PC-3 (cell line): ENCODE measurements at regions of chr1 and their contacts with region 1.

Region 1: DNA sequence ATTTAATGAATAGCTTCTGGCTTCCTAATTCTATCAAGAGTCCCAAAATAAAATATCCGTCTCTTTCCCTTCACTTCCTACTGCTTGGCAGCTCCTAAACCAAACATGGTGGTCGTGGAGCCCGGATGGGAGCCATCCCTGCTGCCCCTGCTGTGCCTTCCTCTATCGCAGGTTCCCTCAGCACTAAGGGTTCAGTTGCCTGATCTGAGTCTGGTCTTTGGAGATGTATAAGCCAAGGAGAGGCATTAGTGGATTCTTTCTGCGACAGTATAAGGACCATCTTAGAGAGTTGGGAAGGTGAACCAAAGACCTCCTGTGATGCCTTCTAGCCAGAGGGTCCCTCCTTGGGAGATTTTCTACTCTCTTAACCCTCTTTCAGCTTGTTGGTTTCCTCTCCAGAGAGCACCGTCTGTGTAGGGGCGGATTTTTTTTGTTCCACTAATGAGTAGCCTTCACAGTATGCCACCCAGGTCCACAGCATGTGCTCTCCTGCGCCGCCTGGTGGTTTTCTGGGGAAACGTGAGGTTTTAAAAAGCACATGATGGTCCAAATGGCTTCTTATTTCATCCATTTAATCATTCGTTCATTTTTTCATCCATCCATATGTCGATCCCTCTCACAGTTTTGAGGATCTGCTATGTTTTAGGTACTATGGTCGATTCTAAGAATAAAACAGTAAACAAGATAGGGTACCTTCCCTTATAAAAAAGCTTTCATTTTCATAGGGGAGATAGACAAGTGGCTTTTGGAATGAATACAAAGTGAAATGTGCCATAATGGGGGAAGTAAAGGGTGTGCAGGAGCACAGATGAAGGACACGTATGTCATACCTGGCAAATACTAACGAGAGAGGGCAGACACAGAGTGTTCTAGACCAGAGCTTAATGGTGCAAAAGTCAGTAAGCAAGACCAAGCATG is 71.0 kb downstream of the NFASC start:
- DNase-seq: peak; percentile 85
- ATAC-seq: peak; percentile 67
- H3K4me3 ChIP-seq: no peak overlapping the region
- H3K27ac ChIP-seq: no peak overlapping the region
- H3K4me1 ChIP-seq: no peaks in the 10 kb centered on the region
- H3K27me3 ChIP-seq: peaks cover 70% of the 10 kb centered on the region
- CTCF ChIP-seq: peak; percentile 98

Region 2: DNA sequence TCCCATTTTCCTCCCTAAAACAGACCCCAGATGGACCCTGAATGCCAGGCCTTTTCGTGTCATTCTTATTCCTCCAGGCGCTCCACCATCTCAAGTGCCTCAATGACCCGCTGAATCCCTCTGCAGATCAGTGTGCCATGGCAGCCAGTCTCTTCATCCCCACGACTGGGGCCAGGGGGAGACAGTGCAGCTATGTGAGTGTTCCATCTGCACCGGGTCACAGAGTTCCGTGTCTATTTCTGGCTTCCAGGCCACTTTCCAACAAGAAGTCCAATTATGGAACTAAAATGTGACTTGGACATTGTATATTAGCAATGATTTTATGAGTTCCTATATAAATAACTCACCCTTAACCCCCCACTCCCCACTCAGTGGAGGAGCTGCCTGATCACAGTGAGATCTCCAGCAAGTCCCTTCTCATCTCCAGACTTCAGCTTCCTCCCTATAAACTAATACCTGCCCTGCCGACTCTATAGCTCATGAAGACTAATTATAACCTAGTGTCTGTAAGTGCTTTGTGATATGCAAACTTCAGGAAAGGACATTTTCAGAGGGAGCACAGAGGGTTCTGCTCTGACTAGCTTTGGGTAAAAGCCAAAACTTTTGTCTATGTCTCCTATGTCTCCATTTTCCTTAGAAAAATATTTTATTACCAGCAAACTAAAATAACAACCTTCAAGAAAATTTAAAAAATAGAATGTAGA is 127.3 kb before region 1 on chr1:
- CTCF ChIA-PET with region 1: no interaction called
- POLR2A ChIA-PET with region 1: no interaction called
- intact Hi-C with region 1: no loop called
- DNase-seq: no peak
- ATAC-seq: no peak
- H3K4me3 ChIP-seq: no peak overlapping the region
- H3K27ac ChIP-seq: no peak overlapping the region
- H3K4me1 ChIP-seq: no peaks in the 10 kb centered on the region
- H3K27me3 ChIP-seq: peaks cover 62% of the 10 kb centered on the region
- CTCF ChIP-seq: no peak

Region 3: DNA sequence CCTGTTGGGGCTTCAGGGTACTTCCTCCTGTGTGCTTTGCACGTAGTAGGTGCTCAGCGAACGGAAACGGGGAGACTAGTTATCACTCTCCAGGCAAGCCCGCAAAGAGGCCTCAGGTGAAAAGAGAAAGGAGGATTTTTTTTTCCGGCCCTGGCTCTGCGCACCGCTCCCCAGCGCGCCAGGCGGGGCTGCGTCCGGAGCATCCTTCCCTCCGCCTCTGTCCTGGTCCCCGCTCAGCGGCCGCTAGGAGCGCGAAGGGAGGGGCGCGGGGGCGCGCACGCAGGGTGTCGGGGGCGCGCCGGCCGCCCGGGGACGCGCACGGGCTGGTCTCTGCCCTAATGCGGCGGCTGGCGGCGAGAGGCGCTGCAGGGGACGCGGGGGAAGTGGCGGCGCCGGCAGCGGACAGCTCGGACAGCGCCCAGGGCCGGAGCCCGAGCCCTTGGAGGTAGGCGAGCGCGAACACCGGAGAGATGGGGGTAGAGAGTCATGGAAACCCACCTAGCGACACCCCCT is 113.3 kb before region 1 on chr1:
- CTCF ChIA-PET with region 1: no interaction called
- POLR2A ChIA-PET with region 1: no interaction called
- intact Hi-C with region 1: loop called (anchors 5 kb)
- DNase-seq: peak; percentile 86
- ATAC-seq: peak; percentile 87
- H3K4me3 ChIP-seq: peak overlapping the region; percentile 8; the same call in 1 of the 2 replicates
- H3K27ac ChIP-seq: no peak overlapping the region
- H3K4me1 ChIP-seq: no peaks in the 10 kb centered on the region
- H3K27me3 ChIP-seq: peaks cover 86% of the 10 kb centered on the region
- CTCF ChIP-seq: no peak; the same call in 1 of the 2 replicates